ENCODE measurements at regions of chrX and their contacts with region 1.

Region 1: DNA sequence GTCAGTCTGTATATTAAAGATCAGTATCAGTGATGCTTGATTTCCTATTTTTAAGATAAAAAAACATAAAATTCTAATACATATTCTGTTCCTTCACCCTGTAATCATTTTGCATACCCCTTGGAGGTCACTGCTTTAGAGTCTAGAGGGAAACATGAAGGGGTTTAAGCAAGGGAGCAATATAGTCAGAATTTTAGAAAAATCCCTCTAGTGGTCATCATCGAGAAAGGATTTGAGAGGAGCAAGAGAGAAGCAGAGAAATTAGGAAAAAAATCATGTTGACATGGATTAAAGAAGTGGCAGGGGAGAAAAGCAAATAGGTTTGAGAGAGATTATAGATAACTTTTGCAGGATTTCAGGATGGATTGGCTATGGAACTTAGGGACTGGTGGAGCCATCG is 11.1 kb downstream of the APEX2 start:
- DNase-seq: no peak
- ATAC-seq: no peak
- H3K4me3 ChIP-seq: no peak overlapping the region
- H3K4me3 Mint-ChIP-seq: no peak overlapping the region
- H3K27ac ChIP-seq: no peak overlapping the region
- H3K27ac Mint-ChIP-seq: no peak overlapping the region
- H3K4me1 ChIP-seq: peaks cover 5% of the 10 kb centered on the region
- H3K4me1 Mint-ChIP-seq: peaks cover 15% of the 10 kb centered on the region
- H3K27me3 ChIP-seq: no peaks in the 10 kb centered on the region
- H3K27me3 Mint-ChIP-seq: no peaks in the 10 kb centered on the region
- CTCF ChIP-seq: peak; percentile 12

Region 2: DNA sequence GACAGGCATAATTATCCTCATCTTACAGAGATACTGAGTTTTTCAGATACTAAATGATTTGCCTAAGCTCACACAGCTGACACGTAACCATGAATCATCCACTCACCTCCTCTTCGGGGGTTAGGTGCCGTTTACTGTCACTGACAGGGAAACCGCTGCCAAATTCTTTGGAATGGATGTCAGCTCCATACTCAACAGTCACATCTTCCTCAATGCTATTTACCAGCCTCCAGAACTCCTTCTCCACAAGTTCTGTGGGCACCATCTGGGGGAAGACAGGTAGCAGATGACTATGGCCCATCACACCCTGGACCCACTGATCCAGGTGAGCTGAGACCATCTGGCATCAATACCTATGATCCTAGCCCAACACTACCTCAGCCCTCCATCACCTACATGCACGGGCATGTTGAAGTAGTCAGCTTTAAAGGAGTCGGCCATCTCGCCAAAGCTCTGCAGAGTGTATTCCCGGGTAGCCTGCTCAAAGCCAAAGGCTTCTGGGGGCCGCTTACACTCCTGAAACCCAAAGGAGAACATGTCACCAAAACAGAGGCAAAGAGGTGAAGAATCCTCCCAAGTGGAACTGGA is 1799.8 kb before region 1 on chrX:
- CTCF ChIA-PET with region 1: no interaction called
- POLR2A ChIA-PET with region 1: no interaction called
- intact Hi-C with region 1: loop called in 1 of 2 experiments (anchors 5 kb)
- DNase-seq: no peak
- ATAC-seq: no peak
- H3K4me3 ChIP-seq: no peak overlapping the region
- H3K4me3 Mint-ChIP-seq: no peak overlapping the region
- H3K27ac ChIP-seq: no peak overlapping the region
- H3K27ac Mint-ChIP-seq: no peak overlapping the region
- H3K4me1 ChIP-seq: no peaks in the 10 kb centered on the region
- H3K4me1 Mint-ChIP-seq: no peaks in the 10 kb centered on the region
- H3K27me3 ChIP-seq: no peaks in the 10 kb centered on the region
- H3K27me3 Mint-ChIP-seq: no peaks in the 10 kb centered on the region
- CTCF ChIP-seq: no peak

Region 3: DNA sequence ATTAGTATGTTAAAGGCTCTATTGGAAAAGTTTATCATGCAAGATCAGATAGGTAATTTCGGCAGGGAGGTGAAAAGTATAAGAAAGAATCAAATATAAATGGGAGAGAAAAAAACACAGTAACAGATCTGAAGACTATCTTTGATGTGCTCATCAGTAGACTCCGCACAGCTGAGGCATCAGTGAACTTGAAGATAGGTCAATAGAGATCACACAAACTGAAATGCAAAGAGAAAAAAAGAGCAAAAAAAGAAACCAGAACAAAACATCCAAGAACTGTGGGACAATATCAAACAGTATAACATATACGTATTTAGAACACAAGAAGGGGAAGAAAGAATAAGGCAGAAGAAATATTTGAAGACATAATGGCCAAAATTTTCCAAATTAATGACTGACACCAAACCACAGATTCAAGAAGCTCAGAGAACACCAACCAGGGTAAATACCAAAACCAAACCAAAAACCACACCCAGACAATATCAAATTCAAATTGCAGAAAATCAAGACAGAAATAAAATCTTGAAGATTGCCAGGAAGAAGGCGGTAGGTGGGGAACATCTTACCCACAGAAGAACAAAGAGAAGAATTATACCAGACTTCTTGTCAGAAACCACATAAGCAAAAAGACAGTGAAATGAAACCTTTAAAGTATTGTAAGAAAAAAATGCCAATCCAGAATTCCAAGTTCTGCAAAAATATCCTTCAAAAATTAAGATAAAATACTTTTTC is 46.4 kb before region 1 on chrX:
- CTCF ChIA-PET with region 1: no interaction called
- POLR2A ChIA-PET with region 1: no interaction called
- intact Hi-C with region 1: loop called in 1 of 2 experiments (anchors 10 kb)
- DNase-seq: peak in 2 of 9 experiments; percentile 27 to 53
- ATAC-seq: peak; percentile 56
- H3K4me3 ChIP-seq: peak overlapping the region in 1 of 2 experiments; percentile 19
- H3K4me3 Mint-ChIP-seq: peak overlapping the region; percentile 16
- H3K27ac ChIP-seq: no peak overlapping the region
- H3K27ac Mint-ChIP-seq: peak overlapping the region; percentile 78
- H3K4me1 ChIP-seq: peaks cover 23% of the 10 kb centered on the region
- H3K4me1 Mint-ChIP-seq: peaks cover 33% of the 10 kb centered on the region
- H3K27me3 ChIP-seq: no peaks in the 10 kb centered on the region
- H3K27me3 Mint-ChIP-seq: no peaks in the 10 kb centered on the region
- CTCF ChIP-seq: no peak

Region 4: DNA sequence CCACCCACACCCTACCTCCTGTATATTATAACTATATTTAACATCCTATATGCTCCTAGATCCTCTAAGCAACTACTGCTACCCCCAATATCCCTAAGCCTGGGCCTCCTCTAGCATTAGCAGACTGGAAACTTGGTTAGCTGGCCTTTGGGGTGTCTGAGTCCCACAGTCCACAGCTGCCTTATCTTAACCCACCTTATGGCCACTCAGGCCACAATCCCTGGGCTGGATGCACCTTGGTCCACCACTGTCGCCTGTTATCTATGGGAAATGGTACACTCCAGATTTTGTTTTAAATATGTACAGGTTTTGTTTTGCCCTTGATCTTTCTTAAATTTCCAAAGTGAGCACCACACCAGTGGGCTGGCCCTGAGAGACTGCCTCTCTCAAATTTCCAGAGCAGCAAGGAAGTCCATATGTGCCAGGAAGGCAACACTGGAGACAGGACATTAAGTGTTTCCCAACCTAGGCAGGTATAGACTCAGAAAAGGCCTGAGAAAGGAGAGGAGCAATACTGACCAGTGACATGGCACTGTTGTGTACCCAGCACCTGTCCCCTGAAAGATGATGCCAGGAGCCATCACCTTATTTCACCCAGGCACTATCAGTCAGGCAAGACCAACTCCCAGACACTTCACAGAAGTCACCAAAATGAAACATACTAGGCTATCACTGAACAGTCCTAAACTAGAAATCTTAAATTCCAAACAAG is 18.2 kb before region 1 on chrX:
- CTCF ChIA-PET with region 1: no interaction called
- POLR2A ChIA-PET with region 1: no interaction called
- intact Hi-C with region 1: no loop called
- DNase-seq: no peak
- ATAC-seq: no peak
- H3K4me3 ChIP-seq: no peak overlapping the region
- H3K4me3 Mint-ChIP-seq: no peak overlapping the region
- H3K27ac ChIP-seq: no peak overlapping the region
- H3K27ac Mint-ChIP-seq: no peak overlapping the region
- H3K4me1 ChIP-seq: no peaks in the 10 kb centered on the region
- H3K4me1 Mint-ChIP-seq: no peaks in the 10 kb centered on the region
- H3K27me3 ChIP-seq: no peaks in the 10 kb centered on the region
- H3K27me3 Mint-ChIP-seq: no peaks in the 10 kb centered on the region
- CTCF ChIP-seq: no peak

Measured in CD8-positive, alpha-beta T cell (primary cell).